HCT116 (cell line): ENCODE measurements at regions of chr9 and their contacts with region 1.

Region 1: DNA sequence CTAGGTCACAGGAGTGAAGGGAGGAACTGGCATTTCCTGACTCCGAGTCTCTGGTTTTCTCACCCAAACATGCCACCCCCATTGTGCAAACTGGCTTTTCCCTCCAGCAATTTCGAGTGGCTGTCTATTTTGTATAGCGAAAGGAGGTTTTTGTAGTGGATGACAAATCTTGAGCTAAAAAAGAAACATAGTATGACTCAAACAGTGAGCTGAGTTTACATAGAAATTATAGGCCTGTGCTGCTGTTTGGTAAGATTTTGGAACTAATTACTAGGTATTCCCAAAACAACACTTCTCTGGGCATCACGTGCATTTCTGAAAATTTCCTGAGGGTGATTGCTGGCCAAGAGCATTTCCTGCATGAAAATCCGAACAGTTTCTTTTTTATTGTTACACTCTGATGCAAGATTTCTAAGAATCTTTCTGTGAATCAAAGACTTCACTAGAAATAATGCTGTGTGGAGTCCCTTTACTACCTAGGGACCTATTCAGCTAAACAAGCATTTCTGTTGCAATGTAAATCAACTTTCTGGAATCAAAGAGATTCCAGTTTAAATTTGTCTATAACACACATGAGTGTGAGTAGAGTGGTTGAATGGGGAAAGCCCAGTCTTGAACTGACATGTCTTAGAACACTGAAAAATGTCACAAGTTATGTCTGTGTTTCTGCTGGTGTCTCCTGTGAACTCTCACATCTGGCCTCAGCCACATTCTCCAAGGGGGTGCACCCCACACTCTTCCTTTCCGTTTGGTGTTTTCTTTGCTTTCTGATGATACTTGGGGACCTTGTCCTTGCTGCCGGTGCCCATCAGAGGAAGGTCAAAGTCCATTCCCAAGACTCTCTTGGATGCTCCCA is 33.3 kb upstream of the DAPK1 start:
- DNase-seq: no peak
- ATAC-seq: no peak
- H3K4me3 ChIP-seq: no peak overlapping the region
- H3K27ac ChIP-seq: no peak overlapping the region
- H3K4me1 ChIP-seq: no peaks in the 10 kb centered on the region
- H3K27me3 ChIP-seq: no peaks in the 10 kb centered on the region
- CTCF ChIP-seq: no peak
- POLR2A ChIP-seq: no peak
- RAD21 ChIP-seq: no peak

Region 2: DNA sequence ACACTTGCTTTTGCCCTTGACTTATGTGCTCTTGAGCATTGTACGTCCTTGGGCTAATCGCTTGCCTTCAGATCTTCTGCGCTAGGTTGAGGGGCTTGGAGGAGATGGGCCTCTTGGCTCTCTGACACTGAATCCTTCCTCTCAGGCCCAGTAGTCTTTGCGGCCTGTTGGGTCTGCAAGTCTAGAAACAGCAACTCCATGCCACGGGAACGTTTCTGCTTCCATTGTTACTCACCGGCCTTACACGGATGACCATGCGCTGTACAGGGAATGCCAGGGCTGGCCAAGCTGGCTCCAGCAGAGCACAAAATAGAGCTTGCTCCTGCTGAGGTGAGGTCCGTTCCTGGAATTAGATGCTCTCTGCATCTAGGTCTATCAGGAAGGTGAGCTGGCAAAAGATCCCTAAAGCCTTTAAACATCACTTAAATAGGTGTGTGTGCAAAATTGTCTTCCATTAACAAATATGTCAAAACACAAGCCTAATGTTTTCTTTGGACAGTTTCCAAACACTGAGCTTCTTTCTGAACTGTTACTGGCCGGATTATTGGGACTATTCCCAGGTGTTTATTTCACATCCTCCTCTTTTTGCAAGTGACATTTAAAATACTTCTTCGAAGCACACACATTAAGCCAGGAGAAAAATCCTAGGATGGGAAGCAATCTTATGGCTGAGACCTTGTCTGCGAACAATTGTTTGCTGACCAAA is 63.0 kb after region 1 on chr9:
- CTCF ChIA-PET with region 1: no interaction called
- POLR2A ChIA-PET with region 1: no interaction called
- RAD21 ChIA-PET with region 1: no interaction called
- intact Hi-C with region 1: no loop called
- DNase-seq: no peak
- ATAC-seq: no peak
- H3K4me3 ChIP-seq: no peak overlapping the region
- H3K27ac ChIP-seq: no peak overlapping the region
- H3K4me1 ChIP-seq: no peaks in the 10 kb centered on the region
- H3K27me3 ChIP-seq: no peaks in the 10 kb centered on the region
- CTCF ChIP-seq: no peak
- POLR2A ChIP-seq: no peak
- RAD21 ChIP-seq: no peak

Region 3: GRCh38 chr9:87588339-87588738 is 124.0 kb after region 1 on chr9:
- CTCF ChIA-PET with region 1: no interaction called
- POLR2A ChIA-PET with region 1: no interaction called
- RAD21 ChIA-PET with region 1: no interaction called
- intact Hi-C with region 1: loop called (anchors 5 kb)
- DNase-seq: no peak
- ATAC-seq: no peak
- H3K4me3 ChIP-seq: no peak overlapping the region
- H3K27ac ChIP-seq: no peak overlapping the region
- H3K4me1 ChIP-seq: no peaks in the 10 kb centered on the region
- H3K27me3 ChIP-seq: no peaks in the 10 kb centered on the region
- CTCF ChIP-seq: no peak
- POLR2A ChIP-seq: no peak
- RAD21 ChIP-seq: no peak